ENCODE measurements at regions of chr6 and their contacts with region 1.

Region 1: DNA sequence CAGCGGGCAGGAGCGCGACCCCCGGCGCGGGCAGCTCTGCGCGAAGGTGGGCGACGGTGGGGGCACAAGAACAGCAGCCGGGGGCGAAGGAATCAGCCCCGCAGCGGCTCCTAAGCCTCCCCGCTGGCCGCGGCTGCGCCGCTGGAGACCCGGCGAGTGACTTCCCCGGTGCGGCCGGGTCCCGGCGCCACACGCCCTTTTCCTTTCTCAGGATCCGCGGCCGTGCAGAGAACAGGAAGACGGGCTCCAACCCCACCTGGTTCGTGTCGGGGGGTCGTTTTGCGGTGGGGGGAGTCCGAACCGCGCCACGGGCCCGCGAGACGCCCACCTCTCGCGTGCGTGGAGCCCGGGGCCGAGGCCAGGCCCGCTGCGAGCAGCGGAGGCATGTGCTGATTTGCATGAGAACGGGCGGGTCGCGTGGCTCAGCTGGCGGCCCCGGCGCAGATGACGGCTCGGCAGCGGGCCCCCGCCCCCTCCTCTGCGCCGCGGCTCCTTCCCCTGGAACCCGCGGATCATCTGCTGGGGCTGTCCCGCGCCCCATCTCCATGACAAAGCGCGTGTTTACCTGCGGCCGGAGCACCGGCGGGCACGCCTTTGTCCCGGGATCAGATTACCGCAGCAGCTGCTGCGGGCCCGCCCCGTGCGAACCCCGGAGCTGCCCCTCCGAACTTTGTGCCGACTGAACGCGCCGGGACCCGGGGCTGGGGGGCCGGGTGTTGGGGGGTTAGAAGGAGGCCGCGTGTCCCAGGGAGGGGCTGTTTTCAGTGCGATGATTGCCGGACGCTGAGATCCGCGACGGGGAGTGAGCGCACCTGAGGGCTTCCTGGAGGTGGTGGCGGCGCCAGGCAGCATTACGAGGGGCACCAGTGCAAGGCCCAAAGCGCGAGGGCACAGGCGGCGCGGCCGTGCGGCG is 4.9 kb upstream of the DLL1 start:
- DNase-seq: peak in 4 of 9 experiments; percentile 39 to 68 (median 57)
- ATAC-seq: peak; percentile 46
- H3K4me3 ChIP-seq: peak overlapping the region; percentile 33 to 47
- H3K4me3 Mint-ChIP-seq: peak overlapping the region; percentile 73
- H3K27ac ChIP-seq: no peak overlapping the region
- H3K27ac Mint-ChIP-seq: no peak overlapping the region
- H3K4me1 ChIP-seq: peaks cover 46% of the 10 kb centered on the region
- H3K4me1 Mint-ChIP-seq: peaks cover 40% of the 10 kb centered on the region
- H3K27me3 ChIP-seq: peaks cover 8 to 37% of the 10 kb centered on the region in 2 experiments
- H3K27me3 Mint-ChIP-seq: peaks cover 42% of the 10 kb centered on the region
- CTCF ChIP-seq: no peak

Region 2: GRCh38 chr6:169950558-169950957 is 345.2 kb before region 1 on chr6:
- CTCF ChIA-PET with region 1: interaction called, 39 read pairs
- POLR2A ChIA-PET with region 1: interaction called, 4 read pairs
- intact Hi-C with region 1: loop called in 1 of 2 experiments (anchors 1 kb)
- DNase-seq: peak in 7 of 9 experiments; percentile 16 to 69 (median 51)
- ATAC-seq: peak; percentile 40
- H3K4me3 ChIP-seq: no peak overlapping the region
- H3K4me3 Mint-ChIP-seq: no peak overlapping the region
- H3K27ac ChIP-seq: no peak overlapping the region
- H3K27ac Mint-ChIP-seq: no peak overlapping the region
- H3K4me1 ChIP-seq: no peaks in the 10 kb centered on the region
- H3K4me1 Mint-ChIP-seq: no peaks in the 10 kb centered on the region
- H3K27me3 ChIP-seq: no peaks in the 10 kb centered on the region
- H3K27me3 Mint-ChIP-seq: no peaks in the 10 kb centered on the region
- CTCF ChIP-seq: peak; percentile 53

Region 3: GRCh38 chr6:170087941-170088581 is 207.7 kb before region 1 on chr6:
- CTCF ChIA-PET with region 1: interaction called, 8 read pairs
- POLR2A ChIA-PET with region 1: interaction called, 5 read pairs
- intact Hi-C with region 1: loop called in 1 of 2 experiments (anchors 5 kb)
- DNase-seq: peak; percentile 22 to 87 (median 66)
- ATAC-seq: peak; percentile 62
- H3K4me3 ChIP-seq: peak overlapping the region; percentile 48 to 73
- H3K4me3 Mint-ChIP-seq: peak overlapping the region; percentile 91
- H3K27ac ChIP-seq: peak overlapping the region; percentile 63 to 73
- H3K27ac Mint-ChIP-seq: peak overlapping the region; percentile 95
- H3K4me1 ChIP-seq: peaks cover 27% of the 10 kb centered on the region
- H3K4me1 Mint-ChIP-seq: peaks cover 33% of the 10 kb centered on the region
- H3K27me3 ChIP-seq: peaks cover 0 to 4% of the 10 kb centered on the region in 2 experiments
- H3K27me3 Mint-ChIP-seq: no peaks in the 10 kb centered on the region
- CTCF ChIP-seq: no peak

Region 4: DNA sequence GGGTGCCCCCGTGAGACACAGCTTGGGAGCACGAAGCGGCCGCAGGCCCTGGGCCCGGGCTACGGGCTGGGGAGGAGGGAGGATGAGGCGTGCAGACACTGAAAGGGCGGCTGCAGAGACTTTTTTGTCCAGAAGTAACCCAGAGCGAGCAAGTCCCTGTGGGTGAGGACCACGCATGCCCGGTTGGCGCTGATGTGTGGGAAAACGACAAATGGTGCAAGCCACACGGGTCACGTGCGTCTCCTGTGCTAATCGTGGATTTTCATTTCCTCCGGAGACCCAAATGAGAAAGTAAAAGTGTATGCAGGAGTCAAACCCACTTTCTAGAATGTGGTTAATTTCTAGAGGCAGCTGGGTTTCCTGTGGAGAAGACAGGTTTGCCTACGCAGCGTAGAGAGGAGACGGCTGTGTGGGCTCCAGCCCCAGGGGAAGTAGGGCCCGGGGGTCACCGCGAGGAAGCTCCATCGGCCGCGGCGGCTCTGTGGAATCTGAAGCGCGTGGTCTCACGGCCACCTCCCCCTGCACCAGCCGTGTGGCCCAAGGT is 23.9 kb before region 1 on chr6:
- CTCF ChIA-PET with region 1: interaction called, 3 read pairs
- POLR2A ChIA-PET with region 1: interaction called, 41 read pairs
- intact Hi-C with region 1: loop called in 1 of 2 experiments (anchors 2 kb)
- DNase-seq: peak; percentile 51 to 95 (median 80)
- ATAC-seq: peak; percentile 93
- H3K4me3 ChIP-seq: peak overlapping the region; percentile 46 to 54
- H3K4me3 Mint-ChIP-seq: peak overlapping the region; percentile 88
- H3K27ac ChIP-seq: peak overlapping the region; percentile 63 to 71
- H3K27ac Mint-ChIP-seq: peak overlapping the region; percentile 93
- H3K4me1 ChIP-seq: peaks cover 25% of the 10 kb centered on the region
- H3K4me1 Mint-ChIP-seq: peaks cover 24% of the 10 kb centered on the region
- H3K27me3 ChIP-seq: peaks cover 0 to 19% of the 10 kb centered on the region in 2 experiments
- H3K27me3 Mint-ChIP-seq: no peaks in the 10 kb centered on the region
- CTCF ChIP-seq: no peak

Region 5: GRCh38 chr6:170306324-170307079 is 10.7 kb after region 1 on chr6 and contains the start of gene FAM120B:
- CTCF ChIA-PET with region 1: interaction called, 13 read pairs
- POLR2A ChIA-PET with region 1: interaction called, 8 read pairs
- intact Hi-C with region 1: loop called (anchors 1 kb)
- DNase-seq: peak; percentile 92 to 98 (median 96)
- ATAC-seq: peak; percentile 93
- H3K4me3 ChIP-seq: peak within 1 kb of the TSS; percentile 76 to 92
- H3K4me3 Mint-ChIP-seq: peak within 1 kb of the TSS; percentile 96
- H3K27ac ChIP-seq: peak within 1 kb of the TSS; percentile 84 to 88
- H3K27ac Mint-ChIP-seq: peak within 1 kb of the TSS; percentile 97
- H3K4me1 ChIP-seq: peaks cover 40% of the 10 kb centered on the region
- H3K4me1 Mint-ChIP-seq: peaks cover 43% of the 10 kb centered on the region
- H3K27me3 ChIP-seq: no peaks in the 10 kb centered on the region
- H3K27me3 Mint-ChIP-seq: peaks cover 11% of the 10 kb centered on the region
- CTCF ChIP-seq: no peak
- total RNA-seq, gene FAM120B: 24.0 to 25.3 TPM